Activated CD8-positive, alpha-beta T cell treated with anti-CD3 and anti-CD28 coated beads for 36 hours (primary cell): ENCODE measurements at regions of chr2 and their contacts with region 1.

Region 1: DNA sequence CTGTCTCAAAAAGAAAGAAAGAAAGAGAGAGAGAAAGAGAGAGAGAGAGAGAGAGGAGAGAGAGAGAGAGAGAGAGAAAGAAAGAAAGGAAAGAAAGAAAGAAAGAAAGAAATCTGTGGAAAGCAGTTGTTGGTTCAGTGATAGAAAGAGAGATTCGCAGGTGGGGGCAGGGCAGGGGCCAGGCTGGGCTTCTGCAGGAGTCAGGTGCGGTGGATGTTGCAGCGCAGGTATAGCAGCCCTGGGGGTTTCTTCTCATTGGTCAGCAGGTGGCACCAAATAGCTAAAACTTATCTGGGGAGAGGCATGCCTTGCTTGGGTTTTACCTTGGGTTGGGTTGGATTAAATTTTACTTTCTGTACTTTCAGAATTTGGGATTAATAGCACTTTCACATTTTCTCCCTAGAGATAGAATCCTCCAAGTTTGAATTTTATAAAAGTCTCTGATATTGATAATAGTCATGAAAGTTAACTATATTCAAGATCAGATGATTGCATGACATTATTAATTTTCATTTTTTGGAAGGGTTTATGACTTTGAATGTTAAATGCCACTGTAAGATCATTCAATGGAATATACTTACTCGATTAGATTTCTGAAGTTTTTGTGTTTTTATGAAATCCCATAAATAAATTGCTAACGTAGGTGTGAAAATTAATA is 66.6 kb downstream of the SPTBN1 start:
- DNase-seq: peak; percentile 70
- ATAC-seq: peak; percentile 92
- H3K4me3 Mint-ChIP-seq: no peak overlapping the region
- H3K27ac Mint-ChIP-seq: no peak overlapping the region
- H3K4me1 Mint-ChIP-seq: peaks cover 12% of the 10 kb centered on the region
- H3K27me3 Mint-ChIP-seq: no peaks in the 10 kb centered on the region
- CTCF ChIP-seq: peak; percentile 74

Region 2: GRCh38 chr2:53802617-53803151 is 720.1 kb before region 1 on chr2:
- CTCF ChIA-PET with region 1: no interaction called
- POLR2A ChIA-PET with region 1: no interaction called
- intact Hi-C with region 1: no loop called
- DNase-seq: no peak
- ATAC-seq: no peak
- H3K4me3 Mint-ChIP-seq: no peak overlapping the region
- H3K27ac Mint-ChIP-seq: no peak overlapping the region
- H3K4me1 Mint-ChIP-seq: no peaks in the 10 kb centered on the region
- H3K27me3 Mint-ChIP-seq: no peaks in the 10 kb centered on the region
- CTCF ChIP-seq: no peak

Region 3: DNA sequence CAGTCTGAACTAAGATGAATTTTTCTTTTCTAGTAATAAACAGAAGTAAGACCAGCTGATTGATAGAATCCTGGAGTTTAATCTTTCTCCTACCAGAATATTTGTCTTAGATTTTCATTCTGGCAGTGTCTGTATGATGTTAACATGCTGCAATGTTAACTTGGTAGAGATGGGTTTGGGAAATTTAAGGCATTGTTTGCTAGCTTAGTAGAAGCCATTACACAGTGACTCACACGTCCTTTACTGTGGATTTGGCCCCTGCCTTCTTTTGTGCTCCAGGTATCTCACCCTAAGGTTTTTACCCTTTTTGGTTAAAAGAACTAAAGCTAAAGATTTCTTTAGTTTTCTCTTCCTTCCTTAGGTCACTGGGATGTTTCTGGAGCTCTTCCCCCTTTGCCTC is 17.4 kb after region 1 on chr2:
- CTCF ChIA-PET with region 1: interaction called, 20 read pairs
- POLR2A ChIA-PET with region 1: no interaction called
- intact Hi-C with region 1: no loop called
- DNase-seq: no peak
- ATAC-seq: no peak
- H3K4me3 Mint-ChIP-seq: no peak overlapping the region
- H3K27ac Mint-ChIP-seq: no peak overlapping the region
- H3K4me1 Mint-ChIP-seq: no peaks in the 10 kb centered on the region
- H3K27me3 Mint-ChIP-seq: no peaks in the 10 kb centered on the region
- CTCF ChIP-seq: no peak

Region 4: GRCh38 chr2:54558188-54559005 is 35.6 kb after region 1 on chr2:
- CTCF ChIA-PET with region 1: interaction called, 34 read pairs
- POLR2A ChIA-PET with region 1: interaction called, 4 read pairs
- intact Hi-C with region 1: loop called (anchors 5 kb)
- DNase-seq: peak; percentile 84
- ATAC-seq: peak; percentile 57
- H3K4me3 Mint-ChIP-seq: peak overlapping the region; percentile 86
- H3K27ac Mint-ChIP-seq: peak overlapping the region; percentile 95
- H3K4me1 Mint-ChIP-seq: peaks cover 50% of the 10 kb centered on the region
- H3K27me3 Mint-ChIP-seq: no peaks in the 10 kb centered on the region
- CTCF ChIP-seq: no peak

Region 5: DNA sequence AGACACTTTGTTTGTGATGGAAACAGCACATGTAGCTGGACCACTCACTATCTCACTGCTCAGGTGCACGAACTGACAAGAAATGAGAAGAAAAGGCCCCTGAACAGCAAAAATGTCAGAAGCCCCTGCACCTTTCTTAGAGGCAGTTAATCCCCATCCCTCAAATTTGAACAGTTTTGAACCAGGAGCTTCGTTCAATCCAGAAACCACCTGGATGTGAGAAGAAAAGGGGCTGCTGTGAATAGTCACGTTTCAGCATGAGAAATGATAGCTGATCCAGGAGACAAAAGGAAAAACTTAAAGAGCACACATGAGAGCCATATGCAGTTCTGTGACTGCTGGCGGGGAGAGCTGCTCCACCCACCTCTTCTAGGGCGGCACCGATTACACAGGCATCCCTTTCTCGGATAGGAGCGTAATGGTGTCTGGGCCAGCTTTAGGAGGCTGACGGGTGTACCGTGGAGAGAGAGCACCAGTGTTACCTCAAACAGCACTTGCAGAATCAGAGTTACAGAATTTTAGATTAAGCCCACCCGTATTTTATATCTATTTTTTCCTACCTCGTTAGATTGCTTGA is 83.7 kb after region 1 on chr2:
- CTCF ChIA-PET with region 1: interaction called, 27 read pairs
- POLR2A ChIA-PET with region 1: interaction called, 3 read pairs
- intact Hi-C with region 1: no loop called
- DNase-seq: peak; percentile 66
- ATAC-seq: peak; percentile 72
- H3K4me3 Mint-ChIP-seq: peak overlapping the region; percentile 42
- H3K27ac Mint-ChIP-seq: peak overlapping the region; percentile 87
- H3K4me1 Mint-ChIP-seq: peaks cover 83% of the 10 kb centered on the region
- H3K27me3 Mint-ChIP-seq: no peaks in the 10 kb centered on the region
- CTCF ChIP-seq: no peak

Region 6: DNA sequence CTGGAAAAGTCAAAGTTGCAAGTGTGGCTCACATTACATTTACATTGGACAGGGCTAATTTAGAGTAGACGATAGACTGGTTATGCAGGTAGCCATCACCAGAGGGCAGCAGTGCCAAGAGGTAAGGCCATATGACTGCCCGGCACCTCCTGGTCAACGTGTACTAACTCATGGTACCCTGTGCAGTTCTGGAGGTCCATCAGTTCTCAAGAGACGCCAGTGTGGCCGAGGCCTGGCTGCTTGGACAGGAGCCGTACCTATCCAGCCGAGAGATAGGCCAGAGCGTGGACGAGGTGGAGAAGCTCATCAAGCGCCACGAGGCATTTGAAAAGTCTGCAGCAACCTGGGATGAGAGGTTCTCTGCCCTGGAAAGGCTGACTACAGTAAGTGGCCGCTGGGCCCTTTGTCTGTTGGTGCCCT is 134.9 kb after region 1 on chr2:
- CTCF ChIA-PET with region 1: interaction called, 40 read pairs
- POLR2A ChIA-PET with region 1: no interaction called
- intact Hi-C with region 1: no loop called
- DNase-seq: peak; percentile 62
- ATAC-seq: peak; percentile 64
- H3K4me3 Mint-ChIP-seq: no peak overlapping the region
- H3K27ac Mint-ChIP-seq: peak overlapping the region; percentile 57
- H3K4me1 Mint-ChIP-seq: peaks cover 14% of the 10 kb centered on the region
- H3K27me3 Mint-ChIP-seq: no peaks in the 10 kb centered on the region
- CTCF ChIP-seq: peak; percentile 67

Region 7: GRCh38 chr2:54838585-54839035 is 315.9 kb after region 1 on chr2:
- CTCF ChIA-PET with region 1: interaction called, 13 read pairs
- POLR2A ChIA-PET with region 1: no interaction called
- intact Hi-C with region 1: loop called (anchors 5 kb)
- DNase-seq: peak; percentile 77
- ATAC-seq: peak; percentile 92
- H3K4me3 Mint-ChIP-seq: no peak overlapping the region
- H3K27ac Mint-ChIP-seq: no peak overlapping the region
- H3K4me1 Mint-ChIP-seq: no peaks in the 10 kb centered on the region
- H3K27me3 Mint-ChIP-seq: no peaks in the 10 kb centered on the region
- CTCF ChIP-seq: peak; percentile 96